Activated T-helper 2 cell treated with anti-CD3 and anti-CD28 coated beads, Interferon-gamma antibody, Interleukin-2, Interleukin-4, amounts not matched to agents 10 μg/mL and 5 μg/mL and 100 μg/mL, durations not matched to agents 14 hours and 24 hours and 36 hours (primary cell): ENCODE measurements at regions of chr5 and their contacts with region 1.

Region 1: GRCh38 chr5:66840511-66841013 is 244.4 kb downstream of the MAST4 start:
- DNase-seq: peak; percentile 46
- H3K4me3 Mint-ChIP-seq: peak overlapping the region; percentile 26
- H3K27ac Mint-ChIP-seq: peak overlapping the region; percentile 79
- H3K4me1 Mint-ChIP-seq: peaks cover 57% of the 10 kb centered on the region
- H3K27me3 Mint-ChIP-seq: no peaks in the 10 kb centered on the region

Region 2: GRCh38 chr5:66821688-66822429 is 18.7 kb before region 1 on chr5:
- intact Hi-C with region 1: loop called (anchors 1 kb)
- DNase-seq: no peak
- H3K4me3 Mint-ChIP-seq: peak overlapping the region; percentile 15
- H3K27ac Mint-ChIP-seq: peak overlapping the region; percentile 83
- H3K4me1 Mint-ChIP-seq: peaks cover 29% of the 10 kb centered on the region
- H3K27me3 Mint-ChIP-seq: peaks cover 11% of the 10 kb centered on the region

Region 3: DNA sequence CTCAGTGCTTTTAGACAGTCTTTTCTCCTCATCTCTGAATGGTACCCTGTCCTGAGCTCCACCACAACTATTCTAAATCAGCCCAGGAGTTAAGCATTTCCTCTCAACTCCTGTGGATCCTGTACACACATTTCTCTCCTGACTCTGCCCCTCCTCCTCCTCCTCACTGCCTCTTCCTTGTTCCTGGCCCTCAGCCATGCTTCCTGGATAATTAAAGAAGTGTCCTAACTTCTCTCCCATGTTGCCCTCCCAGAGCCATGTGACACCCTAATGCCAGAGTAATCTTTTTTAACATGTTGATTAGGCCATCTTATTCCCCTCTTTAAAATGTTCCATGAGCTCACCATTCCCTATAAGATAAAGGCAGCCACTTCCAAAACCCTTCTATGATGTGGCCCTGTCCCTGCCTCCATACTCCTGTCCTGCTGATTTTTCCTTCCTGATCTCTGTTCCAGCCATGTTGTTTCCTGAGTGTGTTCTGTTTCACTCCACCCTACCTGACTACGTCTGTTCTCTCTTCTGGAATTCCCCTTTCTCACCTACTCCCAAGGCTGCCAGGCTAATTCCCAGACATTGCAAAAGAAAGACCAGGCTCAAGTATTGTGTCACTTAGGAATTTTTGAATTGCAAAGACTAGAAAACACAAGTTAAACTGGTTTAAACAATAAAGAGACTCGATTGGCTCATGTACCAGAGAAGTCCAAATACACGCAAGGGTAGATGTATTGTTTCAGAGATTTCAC is 50.8 kb after region 1 on chr5:
- intact Hi-C with region 1: loop called (anchors 5 kb)
- DNase-seq: no peak
- H3K4me3 Mint-ChIP-seq: no peak overlapping the region
- H3K27ac Mint-ChIP-seq: no peak overlapping the region
- H3K4me1 Mint-ChIP-seq: peaks cover 18% of the 10 kb centered on the region
- H3K27me3 Mint-ChIP-seq: peaks cover 40% of the 10 kb centered on the region